BJ (cell line): ENCODE measurements at regions of chr22 and their contacts with region 1.

Region 1: GRCh38 chr22:23893943-23894709 is at the start of gene MIF:
- DNase-seq: peak; percentile 50
- H3K4me3 ChIP-seq: peak within 1 kb of the TSS; percentile 78
- H3K27me3 ChIP-seq: no peaks in the 10 kb centered on the region
- CTCF ChIP-seq: peak; percentile 85
- polyA plus RNA-seq, gene MIF: 202 and 246 TPM in 2 replicates

Region 2: GRCh38 chr22:23737696-23738095 is 156.4 kb before region 1 on chr22:
- CTCF ChIA-PET with region 1: no interaction called
- POLR2A ChIA-PET with region 1: interaction called, 11 read pairs
- DNase-seq: no peak
- H3K4me3 ChIP-seq: no peak overlapping the region
- H3K27me3 ChIP-seq: no peaks in the 10 kb centered on the region
- CTCF ChIP-seq: no peak

Region 3: DNA sequence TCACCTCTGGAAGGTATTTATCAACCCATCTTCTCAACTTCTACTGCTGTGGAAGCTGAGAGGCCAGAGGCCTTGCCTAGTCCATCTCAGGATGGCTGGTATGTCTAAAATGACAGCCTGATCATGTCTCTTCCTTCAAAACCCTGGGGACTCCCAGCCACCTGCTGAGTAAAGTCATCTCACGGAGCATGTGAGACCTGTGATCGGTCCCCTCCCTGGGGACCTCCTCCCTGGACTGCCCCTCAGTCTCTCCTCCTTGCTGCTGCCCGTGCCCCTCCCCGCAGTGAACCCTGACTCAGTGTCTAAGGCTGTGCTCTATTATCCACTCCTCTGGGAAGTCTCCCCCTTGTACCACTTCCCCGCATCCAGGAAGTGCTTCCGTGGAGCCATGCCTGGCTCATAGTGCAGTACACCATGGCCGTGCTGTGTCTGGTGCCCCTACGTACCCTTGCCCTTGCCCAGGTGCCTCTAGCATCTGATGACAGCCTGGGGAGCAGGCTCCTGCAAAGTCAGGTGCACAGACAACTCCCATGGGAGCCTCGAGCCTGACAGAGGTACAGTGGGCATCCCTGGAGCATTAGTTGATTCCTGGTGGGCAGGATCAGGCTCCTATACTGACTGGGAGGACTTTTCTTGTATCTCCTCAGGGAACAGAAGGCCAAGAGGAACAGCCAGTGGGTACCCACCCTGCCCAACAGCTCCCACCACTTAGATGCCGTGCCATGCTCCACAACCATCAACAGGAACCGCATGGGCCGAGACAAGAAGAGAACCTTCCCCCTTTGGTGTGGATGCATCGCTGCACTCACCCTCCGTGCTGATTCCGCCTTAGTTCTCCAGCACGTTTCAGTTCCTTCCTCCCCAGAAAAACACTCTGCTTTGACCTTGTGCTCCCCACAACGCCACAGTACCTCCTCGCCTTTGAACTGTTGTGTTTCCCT is 93.6 kb before region 1 on chr22:
- CTCF ChIA-PET with region 1: no interaction called
- POLR2A ChIA-PET with region 1: no interaction called
- DNase-seq: no peak
- H3K4me3 ChIP-seq: no peak overlapping the region
- H3K27me3 ChIP-seq: no peaks in the 10 kb centered on the region
- CTCF ChIP-seq: no peak

Region 4: DNA sequence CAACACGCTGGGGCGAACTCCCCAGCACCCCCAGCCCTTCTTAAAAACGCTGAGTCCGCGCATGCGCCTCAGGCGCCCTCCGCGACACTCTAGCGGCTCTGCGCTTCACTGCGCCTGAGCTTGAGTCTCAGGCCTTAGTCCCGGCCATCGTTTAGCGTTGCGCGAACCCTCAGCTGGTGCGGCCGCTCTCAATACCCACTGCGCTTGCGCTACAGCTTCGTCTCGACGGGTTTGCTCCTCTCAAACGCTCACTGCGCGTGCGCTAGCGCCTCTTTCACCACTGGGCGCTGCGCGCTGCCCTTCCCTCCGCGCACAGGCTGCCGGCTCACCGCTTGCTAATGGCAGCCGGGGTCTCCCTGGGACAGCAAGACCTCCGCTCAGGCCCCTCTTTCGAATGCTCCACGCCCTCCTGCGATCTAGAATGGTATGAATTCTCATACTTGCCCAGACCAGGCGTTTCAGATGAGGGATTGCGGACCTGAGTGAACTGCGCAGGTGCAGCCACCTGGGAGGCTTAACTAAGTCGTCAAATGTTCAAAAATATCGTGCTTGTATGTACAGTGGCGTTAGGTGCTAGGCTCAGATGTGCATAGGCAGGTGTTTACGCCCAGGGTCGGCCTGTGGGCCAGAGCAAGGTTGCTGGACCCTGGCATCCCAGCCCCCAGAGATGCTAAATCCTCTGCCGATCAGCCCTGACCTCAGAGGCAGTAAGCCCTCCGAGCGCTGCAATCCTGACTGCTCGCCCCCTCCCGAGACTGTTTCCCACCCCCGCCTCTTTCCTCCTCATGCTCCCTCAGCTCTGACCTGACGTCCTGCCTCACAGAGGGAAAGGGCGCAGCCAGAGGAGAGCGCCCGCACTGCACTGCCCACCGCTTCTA is 36.3 kb before region 1 on chr22 and contains the start of gene SLC2A11:
- CTCF ChIA-PET with region 1: interaction called, 11 read pairs
- POLR2A ChIA-PET with region 1: no interaction called
- DNase-seq: peak; percentile 86
- H3K4me3 ChIP-seq: peak within 1 kb of the TSS; percentile 59
- H3K27me3 ChIP-seq: no peaks in the 10 kb centered on the region
- CTCF ChIP-seq: peak; percentile 51
- polyA plus RNA-seq, gene SLC2A11: 9.6 and 14.7 TPM in 2 replicates

Region 5: GRCh38 chr22:23913661-23914353 is 19.7 kb after region 1 on chr22:
- CTCF ChIA-PET with region 1: interaction called, 11 read pairs
- POLR2A ChIA-PET with region 1: interaction called, 3 read pairs
- DNase-seq: peak; percentile 93
- H3K4me3 ChIP-seq: peak overlapping the region; percentile 55
- H3K27me3 ChIP-seq: no peaks in the 10 kb centered on the region
- CTCF ChIP-seq: no peak

Region 6: DNA sequence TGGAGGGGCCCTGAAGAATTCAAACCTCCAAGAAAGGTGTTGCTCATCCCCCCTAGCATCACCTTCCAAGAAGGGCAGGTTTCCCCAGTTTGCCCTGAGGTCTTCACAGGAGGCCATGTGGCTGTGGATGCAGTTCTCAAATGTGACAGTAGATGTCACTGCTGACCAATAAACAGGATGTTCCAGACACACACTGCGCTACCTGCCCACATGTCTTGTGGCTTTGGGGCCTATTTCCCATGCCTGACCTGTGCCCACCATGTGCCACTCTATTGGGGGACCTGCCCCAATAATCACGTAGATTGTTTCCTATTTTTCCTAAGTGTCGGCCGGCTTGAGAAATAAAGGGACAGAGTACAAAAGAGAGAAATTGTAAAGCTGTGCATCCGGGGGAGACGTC is 90.3 kb after region 1 on chr22:
- CTCF ChIA-PET with region 1: no interaction called
- POLR2A ChIA-PET with region 1: no interaction called
- DNase-seq: no peak
- H3K4me3 ChIP-seq: no peak overlapping the region
- H3K27me3 ChIP-seq: no peaks in the 10 kb centered on the region
- CTCF ChIP-seq: no peak